PC-3 (cell line): ENCODE measurements at regions of chr21 and their contacts with region 1.

Region 1: DNA sequence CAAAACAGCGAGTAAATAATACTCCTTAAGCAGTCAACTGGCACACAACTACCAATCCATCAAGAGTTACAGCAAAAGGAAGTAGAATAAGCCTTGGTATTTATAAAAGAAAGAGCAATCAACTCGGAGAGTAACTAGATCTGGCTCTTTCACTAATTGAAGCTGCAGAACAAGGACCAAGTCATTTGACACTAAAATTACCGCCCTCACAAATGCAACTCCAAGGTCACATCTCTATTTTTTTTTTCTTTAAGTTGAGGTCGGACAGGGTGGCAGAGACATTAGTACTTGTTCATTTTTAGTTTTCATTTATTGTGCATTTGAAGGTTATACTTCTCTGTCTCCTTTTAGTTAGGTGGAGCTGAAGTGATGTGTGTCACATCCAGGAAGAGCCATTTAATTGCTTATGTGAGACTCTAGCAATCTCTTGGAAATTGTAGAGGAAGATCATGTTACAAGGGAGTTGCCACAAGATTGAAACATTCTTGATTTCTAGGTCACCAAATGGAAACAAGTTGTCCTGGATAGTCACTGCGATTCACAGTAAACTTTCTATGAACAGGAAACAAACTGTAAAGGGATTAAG is 138.1 kb upstream of the ADAMTS5 start:
- DNase-seq: peak; percentile 60
- ATAC-seq: peak; percentile 82
- H3K4me3 ChIP-seq: no peak overlapping the region
- H3K27ac ChIP-seq: no peak overlapping the region
- H3K4me1 ChIP-seq: 0 out of 2 replicates have a peak, but pooled peaks cover 3% of the 10 kb centered on the region
- H3K27me3 ChIP-seq: no peaks in the 10 kb centered on the region
- CTCF ChIP-seq: no peak

Region 2: GRCh38 chr21:27047658-27048314 is 57.2 kb before region 1 on chr21:
- CTCF ChIA-PET with region 1: no interaction called
- POLR2A ChIA-PET with region 1: no interaction called
- intact Hi-C with region 1: loop called (anchors 1 kb)
- DNase-seq: peak; percentile 53
- ATAC-seq: peak; percentile 85
- H3K4me3 ChIP-seq: no peak overlapping the region
- H3K27ac ChIP-seq: peak overlapping the region; percentile 74
- H3K4me1 ChIP-seq: peaks cover 10% of the 10 kb centered on the region; the same call in 1 of the 2 replicates
- H3K27me3 ChIP-seq: no peaks in the 10 kb centered on the region
- CTCF ChIP-seq: no peak